Activated T-helper 2 cell treated with anti-CD3 and anti-CD28 coated beads, Interferon-gamma antibody, Interleukin-2, Interleukin-4, amounts not matched to agents 10 μg/mL and 5 μg/mL and 100 μg/mL, durations not matched to agents 14 hours and 24 hours and 36 hours (primary cell): ENCODE measurements at regions of chrX and their contacts with region 1.

Region 1: DNA sequence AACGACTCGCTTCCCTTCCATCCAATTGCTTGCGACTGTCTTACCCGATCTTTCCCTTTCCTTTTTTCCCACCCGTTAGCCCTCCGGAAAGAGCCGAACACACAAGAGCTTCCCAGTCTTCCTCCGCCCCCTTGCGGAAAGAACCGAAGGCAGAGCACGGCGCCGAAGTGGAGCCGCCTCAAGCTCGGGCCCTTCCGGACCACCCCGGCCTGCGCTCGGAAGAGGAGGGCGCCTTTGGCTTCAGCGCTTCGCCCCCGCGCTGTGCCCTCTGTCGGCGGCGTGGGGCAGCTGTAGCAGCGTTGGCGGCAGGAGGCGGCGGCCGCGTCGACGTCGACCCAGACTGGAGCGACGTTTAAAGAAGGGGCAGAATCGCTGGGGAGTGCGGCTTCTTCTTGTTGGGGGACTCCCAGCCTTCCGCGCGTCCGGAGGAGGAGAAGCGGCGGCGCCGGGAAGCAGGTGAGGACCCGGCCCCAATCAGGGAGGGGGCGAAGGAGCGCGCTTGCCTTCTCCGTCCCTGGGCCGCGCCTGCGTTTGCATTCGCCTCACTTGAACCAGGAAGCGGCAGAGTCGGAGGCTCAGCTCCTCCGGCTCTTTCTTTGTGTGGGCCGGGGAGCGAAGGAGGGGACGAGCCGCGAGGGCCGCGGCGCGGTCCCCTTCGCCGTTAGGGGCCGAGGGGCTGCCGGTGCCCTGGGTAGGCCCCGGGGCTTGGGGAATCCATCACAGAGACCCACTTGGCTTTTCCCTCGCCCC is at the start of gene ZBTB33:
- DNase-seq: peak; percentile 79
- H3K4me3 Mint-ChIP-seq: peak within 1 kb of the TSS; percentile 89
- H3K27ac Mint-ChIP-seq: peak within 1 kb of the TSS; percentile 91
- H3K4me1 Mint-ChIP-seq: peaks cover 14% of the 10 kb centered on the region
- H3K27me3 Mint-ChIP-seq: peaks cover 4% of the 10 kb centered on the region
- total RNA-seq, gene ZBTB33: 13.3 and 13.4 TPM in 2 replicates

Region 2: DNA sequence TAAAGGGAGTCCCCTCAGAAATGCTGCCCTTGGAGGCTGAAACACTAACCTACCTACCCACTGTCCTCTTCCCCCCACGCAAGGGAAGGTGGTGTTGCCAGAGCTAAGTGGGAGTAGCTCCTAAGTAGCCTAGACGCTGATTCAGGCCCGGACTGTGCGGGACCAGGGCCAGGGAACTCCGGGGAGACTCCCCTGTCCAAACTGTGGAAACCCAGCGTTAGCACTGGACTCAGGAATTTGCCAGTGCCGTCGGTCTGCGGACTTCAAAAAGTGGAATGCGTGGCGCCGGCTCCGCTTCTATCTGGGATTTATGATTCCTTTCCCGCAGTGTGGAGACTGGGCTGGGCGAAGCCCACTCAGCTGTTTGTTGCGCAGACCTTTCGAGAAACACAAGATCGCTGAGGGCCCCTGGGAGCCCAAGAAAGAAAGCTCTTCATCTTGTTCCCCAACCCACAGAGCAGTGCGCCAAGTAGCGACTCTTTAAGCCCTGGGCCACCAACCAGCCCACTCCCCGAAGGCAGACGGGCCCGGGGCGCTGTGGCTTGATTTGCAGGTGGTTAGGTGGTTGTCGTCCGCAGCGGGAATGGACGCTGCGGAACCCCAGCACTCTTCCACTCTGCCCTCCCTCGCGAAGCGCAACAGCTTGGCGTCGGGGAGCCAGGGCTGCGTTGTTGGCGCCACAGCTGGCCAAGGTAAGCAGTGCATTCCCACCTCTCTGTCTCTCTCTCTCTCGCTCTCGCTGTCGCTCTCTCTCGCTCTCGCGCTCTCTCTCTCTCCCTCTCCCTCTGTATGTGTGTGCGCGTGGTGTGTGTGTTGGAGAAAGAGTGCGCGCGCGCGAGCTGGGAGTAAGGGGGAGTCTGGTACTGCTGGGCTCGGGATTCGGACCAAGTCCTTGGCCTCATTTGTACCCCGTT is 58.5 kb after region 1 on chrX:
- intact Hi-C with region 1: loop called (anchors 2 kb)
- DNase-seq: peak; percentile 52
- H3K4me3 Mint-ChIP-seq: peak overlapping the region; percentile 71
- H3K27ac Mint-ChIP-seq: no peak overlapping the region
- H3K4me1 Mint-ChIP-seq: peaks cover 21% of the 10 kb centered on the region
- H3K27me3 Mint-ChIP-seq: peaks cover 61% of the 10 kb centered on the region

Region 3: DNA sequence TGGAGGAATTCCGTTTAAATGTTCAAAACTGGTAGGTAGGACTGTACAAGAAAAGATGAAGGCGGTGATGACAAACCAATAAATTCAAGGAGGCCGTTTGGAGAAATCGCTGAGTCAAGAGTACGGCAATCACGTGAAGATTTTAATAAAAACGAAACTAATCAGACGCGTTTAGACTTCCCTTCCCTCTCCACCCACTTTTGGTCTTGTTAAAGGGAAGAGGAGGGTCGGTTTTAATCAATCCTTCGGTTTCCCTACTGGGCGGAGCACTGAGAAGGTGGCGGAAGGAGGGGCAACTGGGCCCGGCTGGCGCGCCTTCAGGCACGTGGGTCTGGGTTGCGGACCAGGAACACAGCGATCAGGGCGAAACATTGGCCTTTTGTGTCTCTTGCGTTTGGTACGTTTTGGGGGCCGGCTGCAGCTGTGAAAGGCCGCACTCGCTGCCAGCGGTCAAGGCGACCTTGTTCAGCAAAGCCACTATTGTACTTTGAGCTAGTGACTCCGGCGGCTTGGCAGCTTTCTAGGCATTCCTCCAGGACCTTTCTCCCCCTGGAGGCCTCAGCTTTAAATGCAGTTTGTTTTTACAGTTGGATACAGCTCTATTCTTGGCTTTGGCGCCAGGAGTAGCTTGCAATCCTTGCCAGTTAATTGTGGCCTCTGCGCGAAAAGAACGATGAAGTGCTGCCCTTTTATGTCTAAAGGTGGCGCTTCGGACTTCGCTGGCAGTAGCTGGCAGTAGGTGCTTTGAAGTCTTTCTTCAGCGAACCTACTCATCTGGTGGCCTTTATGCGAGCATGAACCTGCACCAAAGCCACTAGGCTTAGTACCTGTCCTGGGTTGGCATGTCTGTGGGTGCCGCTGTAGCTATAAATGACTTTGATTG is 235.2 kb after region 1 on chrX:
- intact Hi-C with region 1: loop called (anchors 5 kb)
- DNase-seq: peak; percentile 50
- H3K4me3 Mint-ChIP-seq: peak overlapping the region; percentile 72
- H3K27ac Mint-ChIP-seq: peak overlapping the region; percentile 87
- H3K4me1 Mint-ChIP-seq: peaks cover 21% of the 10 kb centered on the region
- H3K27me3 Mint-ChIP-seq: no peaks in the 10 kb centered on the region

Region 4: GRCh38 chrX:120575379-120576114 is 324.9 kb after region 1 on chrX:
- intact Hi-C with region 1: no loop called
- DNase-seq: no peak
- H3K4me3 Mint-ChIP-seq: no peak overlapping the region
- H3K27ac Mint-ChIP-seq: no peak overlapping the region
- H3K4me1 Mint-ChIP-seq: peaks cover 2% of the 10 kb centered on the region
- H3K27me3 Mint-ChIP-seq: peaks cover 2% of the 10 kb centered on the region